ENCODE measurements at regions of chr19 and their contacts with region 1.

Region 1: GRCh38 chr19:16371540-16371986 is 46.9 kb downstream of the KLF2 start:
- DNase-seq: peak; percentile 83 to 97 (median 92)
- ATAC-seq: peak; percentile 54
- H3K4me3 ChIP-seq: peak overlapping the region; percentile 44
- H3K4me3 Mint-ChIP-seq: no peak overlapping the region
- H3K27ac ChIP-seq: peak overlapping the region; percentile 90 to 97
- H3K27ac Mint-ChIP-seq: no peak overlapping the region
- H3K4me1 ChIP-seq: peaks cover 95% of the 10 kb centered on the region
- H3K4me1 Mint-ChIP-seq: peaks cover 33% of the 10 kb centered on the region
- H3K27me3 ChIP-seq: no peaks in the 10 kb centered on the region
- H3K27me3 Mint-ChIP-seq: no peaks in the 10 kb centered on the region
- CTCF ChIP-seq: no peak

Region 2: GRCh38 chr19:15836595-15837337 is 534.8 kb before region 1 on chr19:
- CTCF ChIA-PET with region 1: no interaction called
- POLR2A ChIA-PET with region 1: interaction called, 7 read pairs
- intact Hi-C with region 1: loop called in 1 of 2 experiments (anchors 2 kb)
- DNase-seq: peak; percentile 86 to 98 (median 95)
- ATAC-seq: peak; percentile 86
- H3K4me3 ChIP-seq: peak overlapping the region; percentile 96
- H3K4me3 Mint-ChIP-seq: peak overlapping the region; percentile 96
- H3K27ac ChIP-seq: peak overlapping the region; percentile 97 to 99
- H3K27ac Mint-ChIP-seq: peak overlapping the region; percentile 92
- H3K4me1 ChIP-seq: peaks cover 20% of the 10 kb centered on the region
- H3K4me1 Mint-ChIP-seq: peaks cover 18% of the 10 kb centered on the region
- H3K27me3 ChIP-seq: no peaks in the 10 kb centered on the region
- H3K27me3 Mint-ChIP-seq: no peaks in the 10 kb centered on the region
- CTCF ChIP-seq: no peak

Region 3: GRCh38 chr19:16247353-16248182 is 124.0 kb before region 1 on chr19:
- CTCF ChIA-PET with region 1: interaction called, 4 read pairs
- POLR2A ChIA-PET with region 1: interaction called, 37 read pairs
- intact Hi-C with region 1: loop called in 1 of 2 experiments (anchors 5 kb)
- DNase-seq: peak; percentile 64 to 93 (median 83)
- ATAC-seq: peak; percentile 84
- H3K4me3 ChIP-seq: no peak overlapping the region
- H3K4me3 Mint-ChIP-seq: no peak overlapping the region
- H3K27ac ChIP-seq: no peak overlapping the region
- H3K27ac Mint-ChIP-seq: peak overlapping the region; percentile 31
- H3K4me1 ChIP-seq: peaks cover 17% of the 10 kb centered on the region
- H3K4me1 Mint-ChIP-seq: peaks cover 38% of the 10 kb centered on the region
- H3K27me3 ChIP-seq: no peaks in the 10 kb centered on the region
- H3K27me3 Mint-ChIP-seq: no peaks in the 10 kb centered on the region
- CTCF ChIP-seq: peak; percentile 80

Region 4: GRCh38 chr19:16283210-16284061 is 88.1 kb before region 1 on chr19:
- CTCF ChIA-PET with region 1: no interaction called
- POLR2A ChIA-PET with region 1: interaction called, 11 read pairs
- intact Hi-C with region 1: no loop called
- DNase-seq: peak; percentile 22 to 75 (median 52)
- ATAC-seq: peak; percentile 86
- H3K4me3 ChIP-seq: peak overlapping the region; percentile 46
- H3K4me3 Mint-ChIP-seq: peak overlapping the region; percentile 67
- H3K27ac ChIP-seq: peak overlapping the region; percentile 43 to 77
- H3K27ac Mint-ChIP-seq: peak overlapping the region; percentile 67
- H3K4me1 ChIP-seq: peaks cover 42% of the 10 kb centered on the region
- H3K4me1 Mint-ChIP-seq: peaks cover 47% of the 10 kb centered on the region
- H3K27me3 ChIP-seq: peaks cover 0 to 2% of the 10 kb centered on the region in 2 experiments
- H3K27me3 Mint-ChIP-seq: no peaks in the 10 kb centered on the region
- CTCF ChIP-seq: no peak

Region 5: GRCh38 chr19:16330368-16330801 is 41.2 kb before region 1 on chr19:
- CTCF ChIA-PET with region 1: interaction called, 106 read pairs
- POLR2A ChIA-PET with region 1: interaction called, 3,819 read pairs
- intact Hi-C with region 1: loop called (anchors 1 kb)
- DNase-seq: peak; percentile 87 to 98 (median 94)
- ATAC-seq: peak; percentile 66
- H3K4me3 ChIP-seq: peak overlapping the region; percentile 98
- H3K4me3 Mint-ChIP-seq: peak overlapping the region; percentile 92
- H3K27ac ChIP-seq: peak overlapping the region; percentile 77 to 94
- H3K27ac Mint-ChIP-seq: peak overlapping the region; percentile 97
- H3K4me1 ChIP-seq: peaks cover 49% of the 10 kb centered on the region
- H3K4me1 Mint-ChIP-seq: peaks cover 59% of the 10 kb centered on the region
- H3K27me3 ChIP-seq: no peaks in the 10 kb centered on the region
- H3K27me3 Mint-ChIP-seq: peaks cover 24% of the 10 kb centered on the region
- CTCF ChIP-seq: no peak

Region 6: DNA sequence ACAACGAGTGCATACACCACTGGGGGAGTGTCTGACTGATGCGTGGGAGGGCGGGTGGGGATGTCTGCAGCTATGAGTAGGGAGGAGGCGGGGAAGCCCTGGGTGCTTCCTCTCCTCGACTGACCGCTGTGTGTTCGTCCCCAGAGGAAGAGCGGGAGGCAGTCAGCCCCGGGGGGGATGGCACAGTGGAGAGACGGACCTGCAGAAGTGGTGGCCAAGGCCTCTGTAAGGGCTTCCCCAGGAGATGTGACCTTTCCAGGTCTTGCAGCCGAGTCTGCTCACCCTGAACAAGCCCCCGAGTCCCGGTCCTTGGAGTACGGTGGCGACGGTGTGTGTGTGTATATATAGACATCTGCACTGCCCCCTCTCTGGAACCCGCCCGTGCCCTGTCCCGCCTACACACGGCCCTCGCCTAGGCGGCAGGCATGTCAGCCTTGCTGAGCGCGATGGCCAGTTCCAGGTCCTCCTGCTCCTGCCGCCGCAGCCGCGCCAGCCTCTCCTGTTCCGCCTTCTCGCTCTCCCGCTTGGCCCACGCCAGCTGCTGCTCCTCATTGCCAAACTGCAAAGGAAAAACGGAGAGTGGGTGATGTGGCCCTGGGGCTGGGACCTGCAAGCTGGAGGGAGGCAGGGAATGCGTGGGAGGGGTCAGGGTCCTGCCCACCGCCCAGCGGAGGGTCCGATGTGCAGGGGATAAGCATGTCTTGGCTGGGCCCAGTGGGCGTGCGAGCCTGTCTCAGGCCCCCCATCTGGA is 16.1 kb before region 1 on chr19:
- CTCF ChIA-PET with region 1: interaction called, 3 read pairs
- POLR2A ChIA-PET with region 1: interaction called, 141 read pairs
- intact Hi-C with region 1: loop called in 1 of 2 experiments (anchors 1 kb)
- DNase-seq: peak in 4 of 14 experiments; percentile 19 to 60 (median 54)
- ATAC-seq: peak; percentile 74
- H3K4me3 ChIP-seq: no peak overlapping the region
- H3K4me3 Mint-ChIP-seq: peak overlapping the region; percentile 63
- H3K27ac ChIP-seq: no peak overlapping the region
- H3K27ac Mint-ChIP-seq: peak overlapping the region; percentile 68
- H3K4me1 ChIP-seq: peaks cover 83% of the 10 kb centered on the region
- H3K4me1 Mint-ChIP-seq: peaks cover 79% of the 10 kb centered on the region
- H3K27me3 ChIP-seq: no peaks in the 10 kb centered on the region
- H3K27me3 Mint-ChIP-seq: no peaks in the 10 kb centered on the region
- CTCF ChIP-seq: no peak

Region 7: DNA sequence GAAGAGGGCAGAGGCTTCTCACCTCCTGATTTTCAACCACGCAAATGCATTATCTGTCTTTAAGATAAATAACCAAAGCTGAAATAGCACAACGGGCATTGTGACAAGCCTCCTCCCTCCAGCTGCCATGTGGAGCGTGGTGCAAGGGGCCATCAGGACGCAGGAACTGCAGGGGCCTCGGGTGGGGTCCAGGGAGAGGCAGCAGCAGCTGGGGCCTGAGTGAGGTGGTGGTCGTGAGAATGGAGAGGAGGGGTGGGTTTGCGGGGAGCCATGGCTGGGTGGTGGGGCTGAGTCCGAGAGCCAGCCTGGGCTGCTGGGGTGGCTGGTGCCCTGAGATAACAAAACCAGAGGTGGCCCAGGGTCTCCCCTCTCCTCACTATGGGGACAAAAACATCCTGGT is 34.2 kb after region 1 on chr19:
- CTCF ChIA-PET with region 1: no interaction called
- POLR2A ChIA-PET with region 1: no interaction called
- intact Hi-C with region 1: no loop called
- DNase-seq: no peak
- ATAC-seq: no peak
- H3K4me3 ChIP-seq: no peak overlapping the region
- H3K4me3 Mint-ChIP-seq: no peak overlapping the region
- H3K27ac ChIP-seq: no peak overlapping the region
- H3K27ac Mint-ChIP-seq: no peak overlapping the region
- H3K4me1 ChIP-seq: no peaks in the 10 kb centered on the region
- H3K4me1 Mint-ChIP-seq: peaks cover 7% of the 10 kb centered on the region
- H3K27me3 ChIP-seq: no peaks in the 10 kb centered on the region
- H3K27me3 Mint-ChIP-seq: no peaks in the 10 kb centered on the region
- CTCF ChIP-seq: no peak

Region 8: GRCh38 chr19:16417660-16418596 is 46.4 kb after region 1 on chr19:
- CTCF ChIA-PET with region 1: interaction called, 3 read pairs
- POLR2A ChIA-PET with region 1: interaction called, 3 read pairs
- intact Hi-C with region 1: loop called in 1 of 2 experiments (anchors 5 kb)
- DNase-seq: peak; percentile 57 to 86 (median 67)
- ATAC-seq: peak; percentile 96
- H3K4me3 ChIP-seq: no peak overlapping the region
- H3K4me3 Mint-ChIP-seq: no peak overlapping the region
- H3K27ac ChIP-seq: no peak overlapping the region
- H3K27ac Mint-ChIP-seq: peak overlapping the region; percentile 33
- H3K4me1 ChIP-seq: peaks cover 10% of the 10 kb centered on the region
- H3K4me1 Mint-ChIP-seq: peaks cover 12% of the 10 kb centered on the region
- H3K27me3 ChIP-seq: no peaks in the 10 kb centered on the region
- H3K27me3 Mint-ChIP-seq: no peaks in the 10 kb centered on the region
- CTCF ChIP-seq: peak; percentile 89

Region 9: GRCh38 chr19:16441661-16442162 is 70.1 kb after region 1 on chr19:
- CTCF ChIA-PET with region 1: no interaction called
- POLR2A ChIA-PET with region 1: no interaction called
- intact Hi-C with region 1: no loop called
- DNase-seq: peak in 2 of 14 experiments; percentile 14 to 33
- ATAC-seq: peak; percentile 55
- H3K4me3 ChIP-seq: no peak overlapping the region
- H3K4me3 Mint-ChIP-seq: no peak overlapping the region
- H3K27ac ChIP-seq: no peak overlapping the region
- H3K27ac Mint-ChIP-seq: no peak overlapping the region
- H3K4me1 ChIP-seq: peaks cover 10% of the 10 kb centered on the region
- H3K4me1 Mint-ChIP-seq: peaks cover 34% of the 10 kb centered on the region
- H3K27me3 ChIP-seq: no peaks in the 10 kb centered on the region
- H3K27me3 Mint-ChIP-seq: no peaks in the 10 kb centered on the region
- CTCF ChIP-seq: no peak

Region 10: GRCh38 chr19:16462757-16463250 is 91.2 kb after region 1 on chr19:
- CTCF ChIA-PET with region 1: no interaction called
- POLR2A ChIA-PET with region 1: no interaction called
- intact Hi-C with region 1: no loop called
- DNase-seq: no peak
- ATAC-seq: no peak
- H3K4me3 ChIP-seq: no peak overlapping the region
- H3K4me3 Mint-ChIP-seq: no peak overlapping the region
- H3K27ac ChIP-seq: no peak overlapping the region
- H3K27ac Mint-ChIP-seq: no peak overlapping the region
- H3K4me1 ChIP-seq: peaks cover 47% of the 10 kb centered on the region
- H3K4me1 Mint-ChIP-seq: peaks cover 57% of the 10 kb centered on the region
- H3K27me3 ChIP-seq: no peaks in the 10 kb centered on the region
- H3K27me3 Mint-ChIP-seq: no peaks in the 10 kb centered on the region
- CTCF ChIP-seq: no peak

Measured in CD4-positive, alpha-beta T cell (primary cell).